ENCODE measurements at regions of chr3 and their contacts with region 1.

Region 1: DNA sequence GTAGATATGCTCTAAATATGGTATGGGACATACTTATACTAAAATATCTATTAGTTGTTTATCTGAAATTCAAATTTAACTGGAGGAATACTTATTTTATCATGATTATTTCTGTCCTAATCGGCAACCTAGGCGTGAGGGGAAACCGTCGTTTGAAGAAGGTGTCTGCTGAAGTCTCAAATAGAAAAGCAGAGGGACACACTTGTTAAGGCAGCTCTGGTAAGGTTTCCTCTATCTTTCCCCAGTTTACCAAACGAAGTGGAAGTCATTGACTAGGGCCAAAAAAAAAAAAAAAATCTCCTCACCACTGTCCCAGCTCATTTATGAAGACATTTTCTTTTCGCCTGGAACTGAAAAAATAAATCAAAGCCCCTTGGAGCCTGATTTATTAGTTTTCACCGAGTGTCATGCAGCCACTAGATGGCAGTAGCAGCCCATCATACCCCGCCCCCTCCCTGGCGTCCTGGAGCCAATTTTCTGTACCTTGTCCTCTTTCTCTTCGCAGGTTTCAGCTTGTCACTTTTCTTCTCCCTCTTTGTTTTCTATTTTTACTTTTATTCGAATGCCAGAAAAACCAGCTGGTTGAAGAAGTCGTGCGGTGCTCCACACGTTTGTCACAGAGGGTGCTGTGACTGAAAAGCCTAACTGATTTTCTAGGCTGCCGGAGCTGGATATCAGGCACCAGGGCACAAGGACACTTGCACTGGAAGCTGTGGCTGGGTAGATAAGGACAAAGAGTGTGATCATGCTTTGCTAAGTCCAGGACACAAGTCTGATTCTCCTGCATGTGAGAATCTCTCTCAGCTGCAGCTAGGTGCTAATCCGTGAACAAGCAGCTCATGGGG is 238.7 kb downstream of the ZPLD1 start:
- DNase-seq: peak; percentile 61
- H3K4me3 Mint-ChIP-seq: peak overlapping the region; percentile 9
- H3K27ac Mint-ChIP-seq: no peak overlapping the region
- H3K4me1 Mint-ChIP-seq: no peaks in the 10 kb centered on the region
- H3K27me3 Mint-ChIP-seq: peaks cover 93% of the 10 kb centered on the region
- CTCF ChIP-seq: peak; percentile 87

Region 2: DNA sequence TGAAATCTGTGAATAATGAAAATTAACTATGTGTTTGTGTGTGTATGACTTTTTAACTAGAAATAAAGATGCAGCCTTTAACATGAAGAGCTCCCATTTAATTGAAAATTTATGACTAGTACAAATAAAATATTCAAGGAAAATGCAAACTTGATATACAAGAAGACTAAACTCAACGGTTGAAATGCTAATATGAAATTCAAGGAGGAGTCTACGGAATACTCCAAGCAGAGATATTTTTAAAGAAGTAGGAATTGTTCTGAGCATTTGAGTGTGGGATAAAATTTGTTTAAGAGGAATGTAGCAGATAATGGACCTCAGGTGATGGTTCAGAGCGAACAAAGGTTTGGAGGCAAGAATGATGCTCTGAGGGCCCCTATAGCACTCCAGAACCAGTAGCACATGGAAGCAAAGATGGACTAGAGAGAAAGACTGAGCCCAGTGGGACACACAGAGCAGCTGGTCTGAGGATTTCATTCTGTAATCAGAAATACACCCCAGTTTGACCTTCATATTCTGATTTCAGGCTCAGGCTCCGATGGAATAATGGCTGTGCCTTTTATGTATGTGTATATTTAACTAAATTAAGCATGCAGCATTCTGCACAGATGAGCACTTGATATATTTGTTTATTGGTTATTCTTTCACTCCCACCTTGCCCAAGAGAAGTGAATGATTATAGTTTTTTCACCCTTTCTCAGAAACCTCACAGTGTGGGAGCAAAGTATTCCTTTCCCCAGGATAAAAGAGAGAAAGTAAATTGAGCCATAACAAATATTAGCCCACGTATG is 11.6 kb before region 1 on chr3:
- CTCF ChIA-PET with region 1: interaction called, 24 read pairs
- POLR2A ChIA-PET with region 1: no interaction called
- intact Hi-C with region 1: no loop called
- DNase-seq: no peak
- H3K4me3 Mint-ChIP-seq: no peak overlapping the region
- H3K27ac Mint-ChIP-seq: no peak overlapping the region
- H3K4me1 Mint-ChIP-seq: no peaks in the 10 kb centered on the region
- H3K27me3 Mint-ChIP-seq: peaks cover 96% of the 10 kb centered on the region
- CTCF ChIP-seq: no peak

Region 3: GRCh38 chr3:102687851-102688555 is 14.5 kb after region 1 on chr3:
- CTCF ChIA-PET with region 1: interaction called, 21 read pairs
- POLR2A ChIA-PET with region 1: no interaction called
- intact Hi-C with region 1: no loop called
- DNase-seq: no peak
- H3K4me3 Mint-ChIP-seq: no peak overlapping the region
- H3K27ac Mint-ChIP-seq: no peak overlapping the region
- H3K4me1 Mint-ChIP-seq: no peaks in the 10 kb centered on the region
- H3K27me3 Mint-ChIP-seq: peaks cover 85% of the 10 kb centered on the region
- CTCF ChIP-seq: no peak

Region 4: GRCh38 chr3:102715030-102715697 is 41.7 kb after region 1 on chr3:
- CTCF ChIA-PET with region 1: interaction called, 12 read pairs
- POLR2A ChIA-PET with region 1: no interaction called
- intact Hi-C with region 1: no loop called
- DNase-seq: peak; percentile 60
- H3K4me3 Mint-ChIP-seq: no peak overlapping the region
- H3K27ac Mint-ChIP-seq: no peak overlapping the region
- H3K4me1 Mint-ChIP-seq: peaks cover 12% of the 10 kb centered on the region
- H3K27me3 Mint-ChIP-seq: peaks cover 53% of the 10 kb centered on the region
- CTCF ChIP-seq: no peak

Region 5: DNA sequence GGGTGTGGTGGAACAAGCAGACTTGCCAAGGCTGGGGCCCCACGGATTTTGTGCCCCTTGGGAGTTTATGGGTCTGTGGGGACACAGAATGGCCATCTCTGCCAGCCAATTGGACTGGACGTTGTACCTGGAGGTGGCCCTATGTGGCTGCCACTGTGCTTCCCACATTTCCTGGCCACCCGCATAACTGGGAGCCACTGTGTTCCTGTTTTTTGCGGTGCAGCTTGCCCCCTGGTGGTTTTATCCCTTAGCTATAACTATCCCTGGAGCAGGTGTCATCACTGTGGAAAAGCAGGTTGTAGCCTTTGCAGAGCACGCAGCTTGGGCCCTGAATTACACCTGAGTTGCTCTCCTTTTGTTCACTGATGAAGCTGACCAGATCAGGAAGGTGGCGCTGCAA is 67.6 kb after region 1 on chr3:
- CTCF ChIA-PET with region 1: interaction called, 44 read pairs
- POLR2A ChIA-PET with region 1: no interaction called
- intact Hi-C with region 1: loop called (anchors 1 kb)
- DNase-seq: peak; percentile 23
- H3K4me3 Mint-ChIP-seq: no peak overlapping the region
- H3K27ac Mint-ChIP-seq: no peak overlapping the region
- H3K4me1 Mint-ChIP-seq: no peaks in the 10 kb centered on the region
- H3K27me3 Mint-ChIP-seq: peaks cover 29% of the 10 kb centered on the region
- CTCF ChIP-seq: peak; percentile 15

Region 6: DNA sequence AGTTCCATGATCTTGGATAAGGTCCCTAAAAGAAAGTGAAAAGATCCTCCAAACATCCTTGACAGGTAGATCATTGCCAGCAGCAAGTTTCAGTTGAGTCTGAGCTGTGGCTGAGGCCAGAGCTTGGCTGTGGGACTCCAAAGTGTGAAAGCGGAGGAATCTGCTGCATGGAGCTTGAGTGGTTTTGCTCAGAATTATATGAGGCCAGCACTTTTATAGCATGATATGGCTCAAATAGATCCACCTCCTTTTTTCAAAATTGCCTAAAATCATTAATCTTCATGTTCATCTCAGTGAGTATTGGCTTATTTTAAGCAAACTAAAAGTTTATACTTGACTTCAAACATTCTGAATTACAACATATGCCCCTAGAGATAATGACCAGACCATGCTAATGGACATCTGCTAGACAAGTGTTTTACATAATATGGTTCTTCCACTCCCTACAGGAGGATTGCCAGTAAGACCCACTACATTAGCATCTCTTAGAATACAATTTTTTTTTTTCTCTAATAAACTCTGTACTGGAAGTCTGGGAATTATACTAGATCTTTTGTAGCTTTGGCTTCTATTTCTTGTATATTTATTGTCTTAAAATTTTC is 129.4 kb after region 1 on chr3:
- CTCF ChIA-PET with region 1: interaction called, 13 read pairs
- POLR2A ChIA-PET with region 1: no interaction called
- intact Hi-C with region 1: no loop called
- DNase-seq: no peak
- H3K4me3 Mint-ChIP-seq: no peak overlapping the region
- H3K27ac Mint-ChIP-seq: no peak overlapping the region
- H3K4me1 Mint-ChIP-seq: no peaks in the 10 kb centered on the region
- H3K27me3 Mint-ChIP-seq: peaks cover 39% of the 10 kb centered on the region
- CTCF ChIP-seq: no peak

Region 7: GRCh38 chr3:103295974-103296570 is 622.6 kb after region 1 on chr3:
- CTCF ChIA-PET with region 1: interaction called, 15 read pairs
- POLR2A ChIA-PET with region 1: no interaction called
- intact Hi-C with region 1: loop called (anchors 5 kb)
- DNase-seq: peak; percentile 23
- H3K4me3 Mint-ChIP-seq: no peak overlapping the region
- H3K27ac Mint-ChIP-seq: no peak overlapping the region
- H3K4me1 Mint-ChIP-seq: no peaks in the 10 kb centered on the region
- H3K27me3 Mint-ChIP-seq: peaks cover 74% of the 10 kb centered on the region
- CTCF ChIP-seq: peak; percentile 46

Measured in MCF 10A (cell line).